AG04449 (cell line): ENCODE measurements at regions of chr12 and their contacts with region 1.

Region 1: DNA sequence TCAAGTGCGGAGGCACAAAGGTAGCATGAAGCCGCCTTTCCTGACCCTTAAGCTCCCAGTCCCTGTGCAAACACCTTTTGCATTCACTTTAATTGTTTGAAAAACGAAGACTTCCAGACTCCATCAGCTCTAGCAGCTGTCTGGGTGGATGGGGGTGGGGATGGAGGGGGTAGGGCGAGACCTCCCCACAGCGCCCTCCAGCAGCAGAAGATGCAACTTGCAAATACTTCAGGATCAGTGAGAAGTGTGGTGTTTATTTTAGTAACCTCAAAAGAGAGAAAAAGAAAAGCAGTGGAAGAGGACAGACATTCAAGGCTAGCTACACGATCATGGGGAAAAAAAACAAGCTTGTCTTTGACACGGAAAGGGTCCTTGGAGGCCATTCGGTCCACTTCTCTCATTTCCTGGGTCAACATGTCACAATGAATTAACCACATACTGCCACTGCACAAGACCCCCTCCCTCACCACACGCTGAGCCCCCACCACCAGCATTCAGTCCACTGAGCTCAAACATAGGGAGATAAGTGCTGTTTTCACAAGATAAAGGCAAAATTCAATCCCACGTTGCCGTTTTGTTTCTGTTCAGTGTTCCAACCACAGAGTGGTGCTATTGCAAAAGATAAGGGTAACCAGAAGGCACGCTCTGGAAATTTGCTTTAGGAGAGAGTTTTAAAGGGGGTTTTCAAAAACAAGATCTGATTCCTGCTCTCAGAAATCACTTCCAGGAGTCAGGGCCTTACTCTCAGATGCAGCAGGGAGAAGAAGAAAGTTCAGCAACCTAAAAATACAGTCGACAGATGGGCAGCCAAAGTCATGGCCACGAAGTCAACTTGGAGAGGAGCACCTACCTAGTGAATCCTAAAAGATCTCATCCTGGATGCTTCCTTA is 3.3 kb upstream of the NTF3 start:
- DNase-seq: no peak
- H3K4me3 ChIP-seq: peak overlapping the region; percentile 18; the same call in 1 of the 2 replicates
- CTCF ChIP-seq: peak; percentile 62

Region 2: DNA sequence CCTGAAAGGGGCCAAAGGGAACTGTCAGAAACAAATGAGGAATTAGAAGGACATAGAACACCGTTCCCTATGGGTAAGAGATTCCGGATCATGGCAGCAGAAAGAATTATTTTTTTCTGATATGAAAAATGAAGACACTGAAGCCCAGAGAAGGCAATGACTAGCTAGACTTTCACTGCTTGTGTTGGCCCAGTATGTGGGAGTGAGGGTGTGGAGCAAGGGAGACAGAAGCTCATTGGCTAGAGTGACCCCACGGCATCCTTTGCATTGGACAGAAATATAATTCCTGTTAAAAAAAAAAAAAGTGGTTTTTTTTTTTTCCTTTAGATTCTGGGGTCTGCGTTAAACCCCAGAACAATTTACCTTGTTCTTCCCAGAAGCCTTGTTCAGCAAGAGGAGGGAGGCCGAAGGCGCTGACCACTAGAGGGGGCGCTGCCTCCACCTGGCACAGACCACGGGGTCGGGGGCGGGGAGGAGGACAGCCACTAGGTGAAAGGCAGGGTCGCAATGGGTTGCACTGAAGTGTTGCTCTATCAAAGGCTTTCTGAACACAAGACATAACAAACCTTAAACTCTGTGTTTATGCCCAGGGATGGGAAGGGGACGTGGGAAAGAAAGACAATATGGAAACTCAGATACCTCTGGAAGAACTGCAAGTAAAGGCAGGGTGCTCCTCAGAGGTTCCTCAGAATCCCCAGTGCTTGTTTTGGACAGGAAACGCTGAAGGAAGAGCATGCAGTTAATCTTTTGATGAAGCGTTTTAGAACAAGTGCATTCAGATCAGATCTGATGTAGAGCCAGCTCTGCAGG is 228.1 kb before region 1 on chr12:
- CTCF ChIA-PET with region 1: interaction called, 20 read pairs
- POLR2A ChIA-PET with region 1: interaction called, 3 read pairs
- DNase-seq: no peak
- H3K4me3 ChIP-seq: no peak overlapping the region
- CTCF ChIP-seq: peak; percentile 84

Region 3: GRCh38 chr12:5328669-5329517 is 99.7 kb before region 1 on chr12:
- CTCF ChIA-PET with region 1: no interaction called
- POLR2A ChIA-PET with region 1: no interaction called
- DNase-seq: no peak
- H3K4me3 ChIP-seq: no peak overlapping the region
- CTCF ChIP-seq: no peak

Region 4: GRCh38 chr12:5377997-5378592 is 50.5 kb before region 1 on chr12:
- CTCF ChIA-PET with region 1: no interaction called
- POLR2A ChIA-PET with region 1: no interaction called
- DNase-seq: no peak
- H3K4me3 ChIP-seq: no peak overlapping the region
- CTCF ChIP-seq: no peak

Region 5: DNA sequence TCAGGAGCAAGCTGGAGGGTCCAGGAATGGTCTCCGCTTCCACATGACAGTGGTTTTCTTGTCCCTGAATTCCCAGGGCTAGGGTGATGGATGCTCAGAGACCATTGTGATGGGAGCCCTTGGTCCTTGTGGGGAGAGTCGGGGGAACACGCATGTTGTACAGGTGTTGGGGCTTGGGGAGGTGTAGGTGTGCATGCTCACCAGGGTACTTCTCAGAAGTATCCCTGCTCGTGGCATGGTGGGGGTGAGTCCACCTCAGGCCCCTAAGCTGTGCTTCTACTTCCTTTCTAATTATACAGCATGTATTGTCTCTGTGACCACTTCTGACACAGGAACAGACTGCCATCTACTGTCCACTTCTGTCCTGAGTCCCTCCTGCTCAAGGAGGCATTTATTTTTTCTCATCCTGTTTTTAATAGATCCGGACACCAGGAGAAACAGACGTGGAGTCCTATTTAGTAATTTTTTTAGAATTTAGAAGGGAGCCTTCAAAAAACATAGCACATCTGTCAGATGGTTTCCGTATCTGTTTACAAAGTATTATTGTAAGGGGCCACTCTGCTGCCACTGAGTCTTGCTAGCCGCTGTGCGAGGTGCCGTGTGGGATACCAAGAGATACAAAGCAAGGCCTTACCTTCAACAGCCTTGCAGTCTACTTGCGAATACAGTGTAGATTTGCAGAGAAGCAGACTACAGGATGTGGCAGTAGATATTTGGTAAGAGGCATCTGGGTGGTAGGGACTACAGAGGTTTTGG is 13.9 kb after region 1 on chr12:
- CTCF ChIA-PET with region 1: interaction called, 72 read pairs
- POLR2A ChIA-PET with region 1: interaction called, 8 read pairs
- DNase-seq: no peak
- H3K4me3 ChIP-seq: no peak overlapping the region
- CTCF ChIP-seq: peak; percentile 58

Region 6: DNA sequence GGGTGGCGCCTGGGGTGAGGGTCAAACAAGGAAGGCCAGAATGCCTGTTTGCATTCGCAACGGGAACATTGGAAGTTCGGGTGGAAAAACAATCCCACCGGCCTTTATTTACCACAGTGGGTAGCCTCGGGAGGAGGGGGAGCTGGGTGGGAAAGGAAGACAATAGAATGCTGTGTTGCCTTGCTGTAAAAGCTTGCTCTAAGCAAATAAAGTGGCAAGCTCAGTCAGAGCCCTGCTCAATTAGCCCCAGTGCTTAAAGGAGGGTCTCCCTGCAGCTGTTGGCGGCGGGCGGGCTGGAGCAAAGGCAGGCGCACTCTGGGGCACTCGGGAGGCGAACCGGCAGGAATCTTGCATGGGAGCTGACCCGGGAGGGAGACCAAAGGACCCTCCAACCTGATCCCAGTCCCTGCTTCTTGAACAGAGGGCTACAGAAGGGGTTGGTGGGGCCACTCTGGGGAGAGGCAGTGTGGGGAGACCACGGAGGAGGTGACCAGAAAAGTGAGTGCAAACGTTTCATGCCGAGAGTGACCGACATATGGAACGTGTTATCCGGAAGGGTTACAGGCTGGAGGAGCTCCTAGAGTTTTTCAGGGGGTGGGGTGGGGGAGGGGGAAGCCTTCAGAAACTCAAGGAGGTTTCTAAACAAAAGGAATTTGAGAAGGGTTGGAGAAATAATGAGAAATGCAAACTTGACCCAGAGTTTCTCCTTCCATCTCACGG is 51.8 kb after region 1 on chr12:
- CTCF ChIA-PET with region 1: no interaction called
- POLR2A ChIA-PET with region 1: no interaction called
- DNase-seq: no peak
- H3K4me3 ChIP-seq: no peak overlapping the region; the same call in 1 of the 2 replicates
- CTCF ChIP-seq: no peak

Region 7: DNA sequence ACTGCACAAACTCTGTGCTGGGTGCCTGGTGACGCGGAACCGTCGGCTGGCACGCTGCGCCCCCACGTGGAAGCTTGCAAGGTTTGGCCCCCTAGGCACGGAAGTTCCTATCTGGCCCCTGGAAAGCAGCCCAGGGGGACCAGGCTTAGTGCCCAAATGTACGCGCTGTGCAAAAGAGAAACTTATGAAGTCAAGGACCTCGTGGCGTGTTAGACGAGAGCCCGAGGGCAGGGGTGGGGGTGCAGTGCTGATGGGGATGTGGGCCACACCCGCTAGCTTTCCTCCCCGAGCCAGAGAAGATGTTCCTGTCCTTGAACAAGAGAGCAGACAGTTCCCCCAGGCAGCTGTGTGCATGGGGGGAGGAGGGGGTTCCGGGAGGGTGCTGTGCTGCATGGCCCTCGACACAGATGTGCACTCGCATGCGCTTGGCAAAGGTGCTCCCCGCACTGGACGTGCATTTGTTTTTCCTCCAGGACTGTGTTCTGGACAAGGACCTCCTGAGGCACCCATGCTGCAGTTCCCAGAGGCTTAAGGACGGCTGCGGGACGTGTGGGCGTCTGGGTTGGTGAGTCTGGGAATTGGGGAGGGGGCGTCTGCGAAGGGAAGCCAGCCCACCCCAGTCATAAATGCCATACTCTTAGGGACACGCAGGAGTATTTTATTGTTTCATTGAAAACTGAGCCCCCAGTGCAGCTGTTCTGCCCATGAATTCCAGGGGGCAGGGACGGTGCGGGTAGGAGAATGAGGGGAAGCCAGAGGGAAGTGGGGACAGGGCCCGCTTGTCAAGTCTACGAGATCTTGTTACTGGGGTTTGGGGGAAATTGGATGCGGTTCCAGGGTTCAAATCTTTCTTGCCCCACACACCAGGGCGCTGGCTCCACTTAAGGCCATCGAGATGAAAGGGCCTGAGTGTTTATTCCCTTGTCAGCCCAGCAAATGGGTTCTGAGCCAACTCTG is 83.3 kb after region 1 on chr12:
- CTCF ChIA-PET with region 1: interaction called, 33 read pairs
- POLR2A ChIA-PET with region 1: no interaction called
- DNase-seq: no peak
- H3K4me3 ChIP-seq: no peak overlapping the region
- CTCF ChIP-seq: peak; percentile 80

Region 8: GRCh38 chr12:5789469-5789968 is 360.9 kb after region 1 on chr12:
- CTCF ChIA-PET with region 1: interaction called, 110 read pairs
- POLR2A ChIA-PET with region 1: no interaction called
- DNase-seq: no peak
- H3K4me3 ChIP-seq: no peak overlapping the region
- CTCF ChIP-seq: no peak

Region 9: GRCh38 chr12:6039894-6040568 is 611.5 kb after region 1 on chr12:
- CTCF ChIA-PET with region 1: interaction called, 44 read pairs
- POLR2A ChIA-PET with region 1: interaction called, 3 read pairs
- DNase-seq: no peak
- H3K4me3 ChIP-seq: no peak overlapping the region
- CTCF ChIP-seq: peak; percentile 79